ENCODE measurements at regions of chr7 and their contacts with region 1.

Region 1: GRCh38 chr7:1345796-1346755 is 113.2 kb downstream of the MICALL2 start:
- DNase-seq: no peak
- H3K4me3 Mint-ChIP-seq: no peak overlapping the region
- H3K27ac Mint-ChIP-seq: no peak overlapping the region
- H3K4me1 Mint-ChIP-seq: no peaks in the 10 kb centered on the region
- H3K27me3 Mint-ChIP-seq: peaks cover 100% of the 10 kb centered on the region
- CTCF ChIP-seq: no peak

Region 2: DNA sequence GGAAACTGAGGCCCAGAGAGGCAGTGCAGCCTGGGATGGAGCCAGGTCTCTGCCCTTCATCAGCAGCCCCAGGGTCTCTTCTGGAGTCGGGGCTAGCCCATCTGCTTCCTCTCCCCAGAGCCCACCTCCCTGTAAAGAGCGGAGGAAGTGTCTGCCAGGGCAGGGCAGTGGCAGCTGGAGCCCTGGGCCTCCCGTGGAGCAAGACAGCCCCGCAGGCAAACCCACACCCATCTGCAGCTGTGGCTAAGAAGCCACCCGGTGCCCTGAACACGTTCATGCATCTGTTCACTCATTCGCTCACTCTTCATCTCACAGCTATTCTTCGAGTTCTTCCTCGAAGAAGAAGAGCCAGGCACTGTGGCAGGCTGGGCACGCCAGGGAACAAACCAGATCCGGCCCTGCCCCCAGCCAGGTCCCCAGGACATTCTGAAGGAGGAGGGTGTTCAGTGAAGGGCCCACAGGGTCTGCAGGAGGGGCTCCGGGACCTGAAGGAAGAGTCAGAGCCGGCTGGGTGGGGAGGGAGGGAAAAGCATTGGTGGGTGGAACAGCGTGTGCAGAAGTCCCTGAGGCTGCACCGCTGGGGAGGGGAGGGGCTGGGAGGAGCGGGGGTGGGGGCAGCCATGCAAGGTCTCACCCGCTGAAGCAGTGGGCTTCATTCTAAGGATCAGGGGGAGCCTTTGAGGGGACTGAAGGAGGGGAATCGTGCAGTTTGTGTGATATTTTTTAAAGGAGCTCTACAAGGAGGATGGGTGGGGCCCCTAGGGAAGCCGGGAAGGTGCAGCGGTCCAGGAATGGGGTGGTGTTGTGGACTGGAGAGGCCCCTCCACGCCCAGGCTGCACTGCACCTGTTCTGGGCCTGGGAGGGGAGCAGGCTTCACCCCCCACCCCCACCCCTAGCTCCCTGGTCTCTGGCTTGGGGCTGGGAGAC is 14.3 kb before region 1 on chr7:
- CTCF ChIA-PET with region 1: interaction called, 10 read pairs
- intact Hi-C with region 1: no loop called
- DNase-seq: no peak
- H3K4me3 Mint-ChIP-seq: no peak overlapping the region
- H3K27ac Mint-ChIP-seq: no peak overlapping the region
- H3K4me1 Mint-ChIP-seq: no peaks in the 10 kb centered on the region
- H3K27me3 Mint-ChIP-seq: peaks cover 79% of the 10 kb centered on the region
- CTCF ChIP-seq: no peak

Region 3: DNA sequence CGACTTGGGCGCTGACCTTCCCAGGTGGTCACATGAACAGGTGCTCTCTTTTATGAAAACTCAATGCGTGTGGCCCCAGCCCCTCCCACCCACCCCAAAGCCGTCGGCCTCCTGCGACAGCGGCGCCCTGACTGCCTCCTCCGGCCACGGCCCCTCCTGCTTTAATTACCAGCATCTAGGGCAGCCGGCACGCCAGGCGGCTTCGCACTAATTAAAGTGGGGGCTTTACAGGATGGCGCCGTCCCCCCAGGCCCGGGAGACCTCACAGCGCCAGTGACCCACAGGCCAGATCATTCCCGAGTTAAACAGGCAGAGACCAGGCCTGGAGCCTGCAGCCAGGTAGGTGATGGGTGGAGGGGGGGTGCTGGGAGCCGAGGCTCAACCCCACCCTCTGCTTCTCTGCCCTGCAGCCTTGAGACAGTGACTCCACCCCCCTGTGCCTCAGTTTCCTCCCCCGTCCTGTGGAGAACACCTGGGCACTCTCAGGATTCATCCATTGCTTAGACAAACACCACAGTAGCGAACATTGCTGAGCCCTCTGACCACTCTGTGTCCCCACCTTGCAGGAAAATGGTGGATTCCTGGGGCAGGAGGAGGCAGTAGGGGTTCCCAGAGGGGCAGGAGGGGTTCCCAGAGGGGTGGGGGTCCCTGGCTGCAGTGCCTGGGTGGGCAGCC is 12.4 kb after region 1 on chr7:
- CTCF ChIA-PET with region 1: interaction called, 11 read pairs
- intact Hi-C with region 1: no loop called
- DNase-seq: no peak
- H3K4me3 Mint-ChIP-seq: no peak overlapping the region
- H3K27ac Mint-ChIP-seq: no peak overlapping the region
- H3K4me1 Mint-ChIP-seq: peaks cover 19% of the 10 kb centered on the region
- H3K27me3 Mint-ChIP-seq: peaks cover 80% of the 10 kb centered on the region
- CTCF ChIP-seq: no peak

Measured in Calu3 (cell line).